CD4-positive, alpha-beta T cell (primary cell): ENCODE measurements at regions of chr1 and their contacts with region 1.

Region 1: GRCh38 chr1:3618881-3619671 is 5.7 kb upstream of the TPRG1L start:
- DNase-seq: peak; percentile 58 to 90 (median 72)
- ATAC-seq: peak; percentile 96
- H3K4me3 ChIP-seq: no peak overlapping the region
- H3K4me3 Mint-ChIP-seq: peak overlapping the region; percentile 49
- H3K27ac ChIP-seq: no peak overlapping the region
- H3K27ac Mint-ChIP-seq: peak overlapping the region; percentile 8
- H3K4me1 ChIP-seq: peaks cover 29% of the 10 kb centered on the region
- H3K4me1 Mint-ChIP-seq: peaks cover 41% of the 10 kb centered on the region
- H3K27me3 ChIP-seq: peaks cover 0 to 2% of the 10 kb centered on the region in 2 experiments
- H3K27me3 Mint-ChIP-seq: peaks cover 14% of the 10 kb centered on the region
- CTCF ChIP-seq: peak; percentile 76

Region 2: GRCh38 chr1:3564921-3565827 is 53.9 kb before region 1 on chr1:
- CTCF ChIA-PET with region 1: interaction called, 16 read pairs
- POLR2A ChIA-PET with region 1: no interaction called
- intact Hi-C with region 1: loop called (anchors 1 kb)
- DNase-seq: peak in 12 of 14 experiments; percentile 10 to 69 (median 29)
- ATAC-seq: peak; percentile 72
- H3K4me3 ChIP-seq: no peak overlapping the region
- H3K4me3 Mint-ChIP-seq: no peak overlapping the region
- H3K27ac ChIP-seq: no peak overlapping the region
- H3K27ac Mint-ChIP-seq: no peak overlapping the region
- H3K4me1 ChIP-seq: no peaks in the 10 kb centered on the region
- H3K4me1 Mint-ChIP-seq: no peaks in the 10 kb centered on the region
- H3K27me3 ChIP-seq: no peaks in the 10 kb centered on the region
- H3K27me3 Mint-ChIP-seq: no peaks in the 10 kb centered on the region
- CTCF ChIP-seq: peak; percentile 77

Region 3: GRCh38 chr1:3598522-3599285 is 20.4 kb before region 1 on chr1:
- CTCF ChIA-PET with region 1: no interaction called
- POLR2A ChIA-PET with region 1: no interaction called
- intact Hi-C with region 1: no loop called
- DNase-seq: no peak
- ATAC-seq: no peak
- H3K4me3 ChIP-seq: no peak overlapping the region
- H3K4me3 Mint-ChIP-seq: no peak overlapping the region
- H3K27ac ChIP-seq: no peak overlapping the region
- H3K27ac Mint-ChIP-seq: no peak overlapping the region
- H3K4me1 ChIP-seq: peaks cover 34% of the 10 kb centered on the region
- H3K4me1 Mint-ChIP-seq: peaks cover 19% of the 10 kb centered on the region
- H3K27me3 ChIP-seq: peaks cover 0 to 2% of the 10 kb centered on the region in 2 experiments
- H3K27me3 Mint-ChIP-seq: no peaks in the 10 kb centered on the region
- CTCF ChIP-seq: no peak